Lower leg skin (tissue), 4 donors: ENCODE measurements at regions of chr15 and their contacts with region 1.

Region 1: DNA sequence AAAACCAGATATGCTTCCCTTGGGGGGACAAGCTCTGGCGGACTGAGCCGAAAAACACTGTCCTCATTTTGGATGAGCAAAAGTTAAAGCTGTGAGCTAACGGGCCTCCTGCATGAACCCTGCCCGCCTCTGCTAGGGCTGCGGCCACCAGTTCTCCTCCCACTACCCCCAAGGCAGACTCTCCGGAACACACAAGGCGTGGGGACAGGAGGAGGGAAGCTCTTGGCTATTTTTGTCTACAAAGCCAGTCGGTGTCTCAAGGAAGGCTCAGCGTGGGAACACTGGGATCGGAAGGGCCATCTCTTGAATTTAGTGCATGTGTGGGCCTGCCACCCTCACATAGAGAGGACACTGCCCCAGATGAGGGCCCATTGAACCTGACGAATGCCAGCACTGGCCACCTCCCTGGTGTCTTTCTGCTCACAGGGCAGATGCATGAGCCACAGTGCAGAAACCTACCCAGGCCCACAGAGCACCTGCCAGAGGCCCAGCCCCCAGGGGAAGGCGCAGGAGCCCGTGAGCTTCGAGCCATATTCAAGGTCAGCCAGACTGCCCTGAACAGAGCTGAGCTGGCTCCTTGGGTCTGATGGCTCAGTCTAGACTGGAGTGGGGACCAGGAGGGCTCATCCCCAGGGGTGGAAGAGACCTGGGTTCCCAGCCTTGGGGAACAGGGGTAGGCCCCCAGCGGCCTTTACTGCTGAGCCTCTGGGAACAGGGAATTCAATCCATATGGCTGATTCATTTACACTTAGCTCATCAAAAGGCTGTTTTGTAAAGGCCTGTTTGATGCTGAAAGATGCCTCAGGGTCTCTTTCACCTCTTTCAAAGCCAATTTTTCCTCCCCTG is 38.3 kb downstream of the HCN4 start:
- DNase-seq: no peak
- H3K4me3 ChIP-seq: no peak overlapping the region
- CTCF ChIP-seq: no peak
- POLR2A ChIP-seq: no peak

Region 2: GRCh38 chr15:74565381-74566085 is 1235.1 kb after region 1 on chr15:
- intact Hi-C with region 1: loop called (anchors 10 kb)
- DNase-seq: peak in 1 of 2 donors; percentile 10
- H3K4me3 ChIP-seq: no peak overlapping the region
- CTCF ChIP-seq: no peak
- POLR2A ChIP-seq: no peak